ENCODE measurements at regions of chrX and their contacts with region 1.

Region 1: DNA sequence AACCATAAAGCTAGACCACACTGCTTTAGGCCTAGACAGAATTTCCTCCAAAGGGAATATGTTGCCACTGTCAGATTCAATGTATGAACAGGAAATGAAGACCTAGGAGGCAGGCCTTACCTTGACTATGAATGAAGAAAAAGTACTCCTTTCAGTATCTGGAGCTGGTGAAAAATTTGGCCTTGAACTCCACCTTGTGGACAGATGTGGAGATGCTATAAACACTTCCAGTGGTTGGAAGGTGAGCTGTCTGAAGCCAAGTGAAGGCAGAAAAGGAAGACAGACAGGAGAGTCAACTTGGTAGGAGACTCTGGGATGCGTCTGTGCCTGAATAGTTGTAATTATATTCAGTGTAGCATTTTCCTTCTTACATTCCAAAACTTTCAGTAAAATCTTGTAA is 17.2 kb downstream of the SPIN3 start:
- DNase-seq: peak; percentile 22
- H3K4me3 Mint-ChIP-seq: no peak overlapping the region
- H3K27ac Mint-ChIP-seq: no peak overlapping the region
- H3K4me1 Mint-ChIP-seq: no peaks in the 10 kb centered on the region
- H3K27me3 Mint-ChIP-seq: no peaks in the 10 kb centered on the region

Region 2: DNA sequence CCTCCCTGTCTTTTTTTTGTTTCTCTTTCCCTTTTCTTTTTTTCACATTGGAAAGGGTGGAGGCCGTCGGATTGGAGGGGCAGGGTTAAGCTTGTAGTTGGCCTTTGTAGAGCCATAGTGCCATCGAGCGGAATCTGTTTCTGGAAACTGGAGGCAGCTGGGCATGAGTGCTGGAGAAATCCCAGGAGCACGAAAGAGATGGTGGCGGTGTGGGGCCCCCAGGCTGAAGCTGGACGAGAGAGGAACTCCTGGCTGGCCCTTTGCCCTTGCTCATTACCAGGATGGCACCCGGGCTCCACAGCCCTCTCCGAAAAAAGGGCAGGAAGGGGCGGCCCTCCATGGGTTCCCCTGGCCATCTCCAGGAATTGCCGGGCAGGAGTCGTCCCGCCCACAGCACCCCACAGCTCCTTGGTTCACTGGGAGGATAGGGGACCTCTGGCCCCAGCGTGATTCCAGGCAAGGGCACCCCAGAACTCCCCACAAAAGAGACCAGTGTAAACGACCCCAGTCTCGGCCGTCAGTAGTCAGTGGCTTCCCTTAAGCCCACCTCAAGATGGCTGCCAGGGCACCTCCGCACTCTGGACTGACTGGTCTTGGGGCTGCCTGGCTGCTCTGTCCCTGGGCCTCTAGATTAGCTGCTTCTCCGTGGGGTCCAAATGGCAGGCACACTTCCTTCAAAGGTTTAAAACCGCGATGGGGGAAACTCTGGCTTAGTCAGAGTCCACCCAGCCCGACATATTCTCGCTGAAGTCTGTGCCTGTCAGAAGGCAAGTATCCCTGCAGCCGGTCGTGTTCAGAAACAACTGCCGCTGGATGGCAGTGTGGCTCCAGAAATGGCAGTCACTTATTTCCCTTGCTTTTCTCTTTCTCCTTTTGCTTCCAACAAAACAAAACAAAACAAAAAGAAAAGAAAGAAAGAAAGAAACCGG is 175.0 kb before region 1 on chrX:
- intact Hi-C with region 1: loop called (anchors 2 kb)
- DNase-seq: peak; percentile 35
- H3K4me3 Mint-ChIP-seq: peak overlapping the region; percentile 64
- H3K27ac Mint-ChIP-seq: no peak overlapping the region
- H3K4me1 Mint-ChIP-seq: peaks cover 32% of the 10 kb centered on the region
- H3K27me3 Mint-ChIP-seq: no peaks in the 10 kb centered on the region

Region 3: DNA sequence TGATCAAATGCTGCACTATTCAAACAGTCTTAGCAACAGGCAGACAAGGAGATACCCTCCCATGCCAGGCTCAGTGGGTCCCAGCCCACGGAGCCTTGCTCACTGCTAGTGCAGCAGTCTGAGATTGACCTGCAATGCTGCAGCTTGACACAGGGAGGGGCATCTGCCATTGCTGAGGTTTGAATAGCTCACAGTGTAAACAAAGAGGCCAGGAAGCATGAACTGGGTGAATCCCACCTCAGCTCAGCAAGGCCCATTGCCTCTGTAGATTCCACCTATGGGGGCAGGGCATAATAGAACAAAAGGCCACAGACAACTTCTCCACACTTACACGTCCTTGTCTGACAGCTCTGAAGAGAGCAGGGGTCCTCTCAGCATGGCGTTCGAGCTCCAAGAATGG is 587.0 kb after region 1 on chrX:
- intact Hi-C with region 1: no loop called
- DNase-seq: no peak
- H3K4me3 Mint-ChIP-seq: no peak overlapping the region
- H3K27ac Mint-ChIP-seq: no peak overlapping the region
- H3K4me1 Mint-ChIP-seq: no peaks in the 10 kb centered on the region
- H3K27me3 Mint-ChIP-seq: no peaks in the 10 kb centered on the region